Activated T-helper 2 cell treated with anti-CD3 and anti-CD28 coated beads, Interferon-gamma antibody, Interleukin-2, Interleukin-4, amounts not matched to agents 10 μg/mL and 5 μg/mL and 100 μg/mL, durations not matched to agents 14 hours and 24 hours and 36 hours (primary cell): ENCODE measurements at regions of chr12 and their contacts with region 1.

Region 1: GRCh38 chr12:6965026-6965661 is 5.3 kb downstream of the PHB2 start:
- DNase-seq: peak; percentile 80
- H3K4me3 Mint-ChIP-seq: no peak overlapping the region
- H3K27ac Mint-ChIP-seq: peak overlapping the region; percentile 75
- H3K4me1 Mint-ChIP-seq: peaks cover 48% of the 10 kb centered on the region
- H3K27me3 Mint-ChIP-seq: no peaks in the 10 kb centered on the region

Region 2: GRCh38 chr12:6662906-6663742 is 302.0 kb before region 1 on chr12 and contains the start of gene ING4:
- intact Hi-C with region 1: loop called (anchors 1 kb)
- DNase-seq: peak; percentile 96
- H3K4me3 Mint-ChIP-seq: peak within 1 kb of the TSS; percentile 89
- H3K27ac Mint-ChIP-seq: peak within 1 kb of the TSS; percentile 91
- H3K4me1 Mint-ChIP-seq: peaks cover 17% of the 10 kb centered on the region
- H3K27me3 Mint-ChIP-seq: no peaks in the 10 kb centered on the region
- total RNA-seq, gene ING4: 18.5 and 19.1 TPM in 2 replicates

Region 3: GRCh38 chr12:6925540-6926279 is 39.4 kb before region 1 on chr12:
- intact Hi-C with region 1: loop called (anchors 2 kb)
- DNase-seq: no peak
- H3K4me3 Mint-ChIP-seq: peak overlapping the region; percentile 83
- H3K27ac Mint-ChIP-seq: peak overlapping the region; percentile 31
- H3K4me1 Mint-ChIP-seq: peaks cover 48% of the 10 kb centered on the region
- H3K27me3 Mint-ChIP-seq: no peaks in the 10 kb centered on the region

Region 4: DNA sequence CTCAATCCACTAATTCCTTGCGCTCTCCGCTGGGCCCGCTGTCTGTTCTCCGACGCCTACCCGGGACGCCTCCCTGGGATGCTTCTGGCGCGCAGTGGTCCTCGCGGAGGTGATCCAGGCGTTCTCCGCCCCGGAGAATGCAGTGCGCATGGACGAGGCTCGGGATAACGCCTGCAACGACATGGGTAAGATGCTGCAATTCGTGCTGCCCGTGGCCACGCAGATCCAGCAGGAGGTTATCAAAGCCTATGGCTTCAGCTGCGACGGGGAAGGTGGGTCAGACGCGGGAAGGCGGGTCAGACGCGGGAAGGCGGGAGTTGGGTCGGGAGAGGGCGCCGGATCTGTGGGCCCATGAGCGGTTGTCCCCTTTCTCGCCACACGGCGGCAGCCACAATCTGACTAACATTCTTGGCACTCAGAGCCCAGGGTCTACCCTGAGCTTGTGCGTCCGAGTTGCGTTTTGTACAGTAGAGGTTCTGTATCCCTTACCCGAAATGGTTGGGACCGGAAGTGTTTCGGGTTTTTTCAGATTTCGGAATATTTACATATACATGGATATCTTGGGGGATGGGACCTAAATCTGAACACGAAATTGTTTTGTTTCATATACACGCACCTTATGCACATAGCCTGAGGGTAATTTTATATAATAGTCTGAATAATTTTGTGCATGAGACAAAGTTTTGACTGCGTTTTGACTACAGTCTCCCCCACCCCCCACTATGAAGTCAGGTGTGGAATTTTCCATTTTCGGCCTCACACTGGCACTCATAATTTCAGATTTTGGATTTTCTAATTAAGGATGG is 20.6 kb before region 1 on chr12:
- intact Hi-C with region 1: loop called (anchors 1 kb)
- DNase-seq: peak; percentile 84
- H3K4me3 Mint-ChIP-seq: peak overlapping the region; percentile 84
- H3K27ac Mint-ChIP-seq: peak overlapping the region; percentile 99
- H3K4me1 Mint-ChIP-seq: peaks cover 50% of the 10 kb centered on the region
- H3K27me3 Mint-ChIP-seq: no peaks in the 10 kb centered on the region

Region 5: GRCh38 chr12:6953442-6954315 is 11.5 kb before region 1 on chr12:
- intact Hi-C with region 1: loop called (anchors 1 kb)
- DNase-seq: peak; percentile 79
- H3K4me3 Mint-ChIP-seq: peak overlapping the region; percentile 94
- H3K27ac Mint-ChIP-seq: peak overlapping the region; percentile 97
- H3K4me1 Mint-ChIP-seq: peaks cover 74% of the 10 kb centered on the region
- H3K27me3 Mint-ChIP-seq: no peaks in the 10 kb centered on the region

Region 6: DNA sequence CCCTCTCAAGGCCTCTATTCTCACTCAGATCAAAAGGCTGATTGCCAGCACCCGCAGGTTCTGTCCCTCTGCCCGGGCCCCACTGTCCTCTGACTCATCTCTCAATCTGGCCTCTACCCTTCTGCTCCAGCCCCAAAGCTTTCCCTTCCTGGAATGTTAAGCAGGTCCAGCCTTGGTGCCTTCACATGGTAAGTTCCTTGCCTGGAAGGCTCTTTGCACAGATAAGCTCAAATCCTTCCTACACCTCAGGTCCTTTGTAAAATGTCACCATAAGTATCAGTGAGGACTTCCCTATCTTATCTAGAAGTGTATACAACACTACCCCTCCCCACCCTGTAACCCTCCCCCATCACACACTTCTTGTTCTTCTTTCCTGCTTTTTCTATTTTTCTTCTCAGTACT is 30.9 kb after region 1 on chr12:
- intact Hi-C with region 1: no loop called
- DNase-seq: no peak
- H3K4me3 Mint-ChIP-seq: no peak overlapping the region
- H3K27ac Mint-ChIP-seq: no peak overlapping the region
- H3K4me1 Mint-ChIP-seq: no peaks in the 10 kb centered on the region
- H3K27me3 Mint-ChIP-seq: no peaks in the 10 kb centered on the region

Region 7: GRCh38 chr12:7018350-7019042 is 53.4 kb after region 1 on chr12 and contains the start of gene LPCAT3:
- intact Hi-C with region 1: loop called (anchors 1 kb)
- DNase-seq: peak; percentile 98
- H3K4me3 Mint-ChIP-seq: peak within 1 kb of the TSS; percentile 91
- H3K27ac Mint-ChIP-seq: peak within 1 kb of the TSS; percentile 84
- H3K4me1 Mint-ChIP-seq: peaks cover 24% of the 10 kb centered on the region
- H3K27me3 Mint-ChIP-seq: no peaks in the 10 kb centered on the region
- total RNA-seq, gene LPCAT3: 30.9 and 34.0 TPM in 2 replicates

Region 8: DNA sequence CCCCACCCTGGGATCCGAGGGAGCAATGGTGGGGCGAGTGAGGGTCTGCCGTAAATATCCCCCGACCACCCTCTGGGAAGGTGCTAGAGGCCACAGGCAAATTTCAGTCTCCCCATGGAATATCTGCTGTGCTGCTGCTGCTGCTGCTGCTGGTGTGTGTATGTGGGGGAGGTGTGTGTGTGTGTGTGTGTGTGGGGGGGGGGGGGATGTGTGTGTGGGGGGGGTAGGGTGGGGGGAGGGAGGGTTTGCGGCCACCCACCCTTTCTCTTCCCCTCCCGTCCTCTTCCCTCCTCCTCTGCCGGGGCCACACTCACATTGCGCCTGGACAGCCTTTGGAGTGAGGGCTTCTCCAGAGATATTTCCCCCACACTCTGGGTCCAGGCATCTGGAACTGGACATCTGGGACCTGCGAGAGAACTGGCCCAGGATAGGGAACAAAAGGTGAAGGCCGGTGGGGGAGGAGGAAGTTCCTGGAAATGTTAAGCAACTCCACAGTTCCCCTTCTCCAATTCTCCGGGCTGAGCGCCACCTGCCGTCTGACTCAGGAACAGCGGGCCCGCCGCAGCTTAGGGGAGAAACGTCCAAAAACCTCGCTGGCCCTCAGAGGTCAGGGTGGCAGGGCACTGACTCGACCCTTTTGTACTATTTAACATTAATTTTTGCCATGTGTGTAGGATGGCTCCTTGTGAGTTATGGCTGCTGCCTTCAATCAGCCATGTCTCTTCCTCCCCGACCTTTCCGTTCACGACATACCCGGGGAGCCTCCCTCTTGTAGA is 143.8 kb after region 1 on chr12 and contains the start of gene C1RL:
- intact Hi-C with region 1: loop called (anchors 2 kb)
- DNase-seq: peak; percentile 66
- H3K4me3 Mint-ChIP-seq: peak within 1 kb of the TSS; percentile 91
- H3K27ac Mint-ChIP-seq: peak within 1 kb of the TSS; percentile 89
- H3K4me1 Mint-ChIP-seq: peaks cover 39% of the 10 kb centered on the region
- H3K27me3 Mint-ChIP-seq: no peaks in the 10 kb centered on the region
- total RNA-seq, gene C1RL: 20.2 and 28.7 TPM in 2 replicates